ENCODE measurements at regions of chrX and their contacts with region 1.

Region 1: DNA sequence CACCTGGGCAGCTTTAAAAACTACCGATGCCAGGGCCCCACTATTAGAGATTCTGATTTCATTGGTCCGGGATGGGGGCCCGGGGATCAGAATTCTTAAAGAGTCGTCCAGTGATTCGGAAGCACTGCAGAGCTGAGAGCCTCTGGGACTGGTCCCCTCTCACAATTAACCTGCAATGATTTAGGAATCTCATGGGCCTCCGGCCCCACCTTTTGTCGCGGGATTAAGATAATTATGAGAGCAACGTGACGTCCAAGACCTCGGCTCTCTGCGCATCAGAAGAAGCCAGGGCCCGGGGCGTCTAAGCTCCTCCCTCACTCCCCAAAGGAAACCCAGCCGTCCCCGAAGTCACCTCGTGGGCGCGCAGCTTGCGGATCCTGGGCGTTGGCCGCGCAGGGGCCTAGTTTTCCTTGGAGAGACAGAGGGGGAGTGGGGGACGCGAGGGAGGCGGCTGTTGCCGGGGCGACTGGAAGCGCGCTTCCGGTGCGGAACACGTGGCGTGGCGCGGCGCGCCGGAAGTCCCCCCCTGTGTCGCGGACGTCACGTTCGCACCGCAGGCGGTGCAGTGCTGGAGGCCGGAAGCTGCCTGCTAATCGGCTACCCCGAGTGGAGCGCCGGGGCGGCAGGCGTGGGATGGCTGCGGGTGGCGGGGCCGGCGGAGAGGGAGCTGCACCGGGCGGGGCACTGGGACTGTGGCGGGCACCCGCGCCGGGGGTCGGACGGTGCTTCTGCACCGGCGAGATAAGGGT is at the start of gene GEMIN8:
- DNase-seq: peak; percentile 87 to 90
- H3K4me3 ChIP-seq: peak within 1 kb of the TSS; percentile 55
- H3K4me3 Mint-ChIP-seq: peak within 1 kb of the TSS; percentile 80
- H3K27ac Mint-ChIP-seq: peak within 1 kb of the TSS; percentile 95
- H3K4me1 ChIP-seq: no peaks in the 10 kb centered on the region; the same call in 1 of the 2 replicates
- H3K4me1 Mint-ChIP-seq: peaks cover 8% of the 10 kb centered on the region
- H3K27me3 ChIP-seq: no peaks in the 10 kb centered on the region
- H3K27me3 Mint-ChIP-seq: no peaks in the 10 kb centered on the region
- CTCF ChIP-seq: no peak
- total RNA-seq, gene GEMIN8: 7.7 and 8.6 TPM in 2 replicates

Region 2: GRCh38 chrX:13750204-13750603 is 279.4 kb before region 1 on chrX:
- CTCF ChIA-PET with region 1: no interaction called
- POLR2A ChIA-PET with region 1: no interaction called
- intact Hi-C with region 1: loop called (anchors 2 kb)
- DNase-seq: peak in 1 of 2 experiments; percentile 39
- H3K4me3 ChIP-seq: no peak overlapping the region
- H3K4me3 Mint-ChIP-seq: no peak overlapping the region
- H3K27ac Mint-ChIP-seq: no peak overlapping the region
- H3K4me1 ChIP-seq: peaks cover 24% of the 10 kb centered on the region
- H3K4me1 Mint-ChIP-seq: peaks cover 17% of the 10 kb centered on the region
- H3K27me3 ChIP-seq: no peaks in the 10 kb centered on the region
- H3K27me3 Mint-ChIP-seq: no peaks in the 10 kb centered on the region
- CTCF ChIP-seq: peak; percentile 41 to 52

Region 3: DNA sequence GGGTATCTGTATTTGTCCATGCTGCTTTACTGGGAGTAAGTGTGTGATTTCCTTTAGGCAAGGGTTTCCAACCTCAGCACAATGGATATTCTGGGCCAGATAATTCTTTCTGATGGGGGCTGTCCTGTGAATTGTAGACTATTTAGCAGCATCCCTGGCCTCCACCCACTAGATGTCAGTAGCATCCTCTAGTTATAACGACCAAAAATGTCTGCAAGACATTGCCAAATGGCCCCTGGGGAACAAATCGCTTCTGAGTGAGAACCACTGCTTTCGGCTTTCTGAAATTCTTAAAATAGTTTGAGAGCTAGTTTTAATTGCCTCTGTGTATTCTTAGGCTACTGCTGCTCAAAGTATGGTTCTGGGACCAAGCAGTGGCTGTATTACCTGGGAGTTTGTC is 131.5 kb before region 1 on chrX:
- CTCF ChIA-PET with region 1: no interaction called
- POLR2A ChIA-PET with region 1: no interaction called
- intact Hi-C with region 1: loop called (anchors 2 kb)
- DNase-seq: peak in 1 of 2 experiments; percentile 15
- H3K4me3 ChIP-seq: no peak overlapping the region
- H3K4me3 Mint-ChIP-seq: no peak overlapping the region
- H3K27ac Mint-ChIP-seq: no peak overlapping the region
- H3K4me1 ChIP-seq: no peaks in the 10 kb centered on the region
- H3K4me1 Mint-ChIP-seq: no peaks in the 10 kb centered on the region
- H3K27me3 ChIP-seq: no peaks in the 10 kb centered on the region
- H3K27me3 Mint-ChIP-seq: no peaks in the 10 kb centered on the region
- CTCF ChIP-seq: peak in 1 of 2 experiments; percentile 26

Region 4: DNA sequence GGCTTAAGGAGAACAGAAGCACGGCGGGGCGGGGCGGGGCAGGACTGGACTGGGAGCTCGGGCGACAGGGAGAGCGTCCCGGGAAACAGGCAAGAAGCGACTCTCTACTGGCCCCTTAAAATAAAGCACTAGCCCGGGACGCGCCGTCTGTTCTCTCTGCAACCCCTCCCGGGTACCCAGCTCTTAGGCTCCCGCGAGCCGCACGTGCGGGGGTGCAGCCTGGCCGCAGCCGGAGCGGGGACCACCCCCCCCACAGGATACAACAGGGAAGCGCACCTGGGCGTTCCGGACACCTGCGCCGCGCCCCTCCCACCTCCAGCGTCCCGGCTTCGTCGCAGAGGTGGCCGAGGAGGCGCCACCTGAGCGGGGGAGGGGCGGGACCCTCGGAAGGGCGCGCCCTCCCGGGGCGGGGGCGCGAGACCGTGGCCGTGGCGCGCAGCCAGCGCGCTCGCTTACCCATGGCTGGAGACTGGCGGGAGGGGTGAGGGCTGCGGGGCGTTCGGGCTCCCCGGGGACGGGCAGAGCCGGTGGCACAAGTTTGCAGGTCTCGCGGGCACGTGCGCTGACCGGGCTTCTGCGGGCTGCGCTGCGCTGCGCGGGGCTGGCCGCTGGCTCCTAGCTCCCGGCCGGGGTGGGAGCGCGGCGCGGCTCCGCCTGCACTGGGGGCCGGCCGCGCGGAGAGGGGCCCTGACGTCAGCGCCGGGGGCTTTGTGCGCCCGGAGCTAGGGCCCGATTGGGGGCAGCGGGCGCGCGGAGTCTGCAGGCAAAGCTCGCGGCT is 91.4 kb before region 1 on chrX:
- CTCF ChIA-PET with region 1: no interaction called
- POLR2A ChIA-PET with region 1: no interaction called
- intact Hi-C with region 1: loop called (anchors 10 kb)
- DNase-seq: peak in 1 of 2 experiments; percentile 17
- H3K4me3 ChIP-seq: peak overlapping the region; percentile 38
- H3K4me3 Mint-ChIP-seq: peak overlapping the region; percentile 60
- H3K27ac Mint-ChIP-seq: no peak overlapping the region
- H3K4me1 ChIP-seq: no peaks in the 10 kb centered on the region
- H3K4me1 Mint-ChIP-seq: no peaks in the 10 kb centered on the region
- H3K27me3 ChIP-seq: no peaks in the 10 kb centered on the region
- H3K27me3 Mint-ChIP-seq: peaks cover 12% of the 10 kb centered on the region
- CTCF ChIP-seq: no peak

Region 5: DNA sequence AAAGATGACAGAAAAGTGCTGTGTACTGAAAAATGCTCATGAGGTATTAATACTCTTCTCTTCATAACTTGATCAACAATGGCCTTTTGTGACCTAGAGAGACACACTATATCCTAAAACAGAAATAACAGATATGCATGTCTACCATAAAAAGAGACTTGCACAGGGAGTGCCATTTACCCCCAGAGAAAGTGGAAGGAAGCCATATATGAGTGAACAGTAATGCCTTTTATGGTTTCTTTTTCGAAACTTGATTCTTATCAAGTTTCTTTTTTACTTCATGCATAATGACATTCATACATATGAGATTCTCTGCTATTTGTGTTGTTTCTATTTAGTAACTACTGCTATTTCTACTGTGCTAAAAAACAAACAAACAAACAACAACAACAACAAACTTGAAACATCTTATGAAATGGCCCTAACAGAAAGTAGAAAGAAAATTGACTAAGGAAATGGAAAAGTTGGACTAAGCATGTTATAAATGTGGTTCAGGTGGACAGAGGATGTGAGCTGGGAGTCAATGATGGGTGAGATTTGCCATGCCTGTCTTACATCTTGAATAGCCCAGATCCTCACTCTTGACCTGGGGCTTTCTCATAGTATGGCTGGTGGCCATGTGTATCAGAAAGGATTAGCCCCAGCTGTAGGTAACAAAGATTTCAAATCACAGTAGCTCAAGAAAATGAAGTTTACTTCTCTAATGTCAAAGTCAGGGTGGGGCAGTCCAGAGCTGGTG is 43.7 kb before region 1 on chrX:
- CTCF ChIA-PET with region 1: no interaction called
- POLR2A ChIA-PET with region 1: no interaction called
- intact Hi-C with region 1: no loop called
- DNase-seq: no peak
- H3K4me3 ChIP-seq: no peak overlapping the region
- H3K4me3 Mint-ChIP-seq: no peak overlapping the region
- H3K27ac Mint-ChIP-seq: no peak overlapping the region
- H3K4me1 ChIP-seq: no peaks in the 10 kb centered on the region
- H3K4me1 Mint-ChIP-seq: no peaks in the 10 kb centered on the region
- H3K27me3 ChIP-seq: no peaks in the 10 kb centered on the region
- H3K27me3 Mint-ChIP-seq: peaks cover 4% of the 10 kb centered on the region
- CTCF ChIP-seq: no peak